Activated CD8-positive, alpha-beta T cell treated with anti-CD3 and anti-CD28 coated beads for 36 hours (primary cell): ENCODE measurements at regions of chr1 and their contacts with region 1.

Region 1: GRCh38 chr1:36115931-36116330 is 9.1 kb downstream of the COL8A2 start:
- DNase-seq: no peak
- ATAC-seq: no peak
- H3K4me3 Mint-ChIP-seq: no peak overlapping the region
- H3K27ac Mint-ChIP-seq: no peak overlapping the region
- H3K4me1 Mint-ChIP-seq: peaks cover 11% of the 10 kb centered on the region
- H3K27me3 Mint-ChIP-seq: no peaks in the 10 kb centered on the region
- CTCF ChIP-seq: no peak

Region 2: GRCh38 chr1:35622510-35623178 is 493.3 kb before region 1 on chr1:
- CTCF ChIA-PET with region 1: no interaction called
- POLR2A ChIA-PET with region 1: no interaction called
- intact Hi-C with region 1: no loop called
- DNase-seq: no peak
- ATAC-seq: no peak
- H3K4me3 Mint-ChIP-seq: no peak overlapping the region
- H3K27ac Mint-ChIP-seq: no peak overlapping the region
- H3K4me1 Mint-ChIP-seq: peaks cover 3% of the 10 kb centered on the region
- H3K27me3 Mint-ChIP-seq: no peaks in the 10 kb centered on the region
- CTCF ChIP-seq: no peak

Region 3: DNA sequence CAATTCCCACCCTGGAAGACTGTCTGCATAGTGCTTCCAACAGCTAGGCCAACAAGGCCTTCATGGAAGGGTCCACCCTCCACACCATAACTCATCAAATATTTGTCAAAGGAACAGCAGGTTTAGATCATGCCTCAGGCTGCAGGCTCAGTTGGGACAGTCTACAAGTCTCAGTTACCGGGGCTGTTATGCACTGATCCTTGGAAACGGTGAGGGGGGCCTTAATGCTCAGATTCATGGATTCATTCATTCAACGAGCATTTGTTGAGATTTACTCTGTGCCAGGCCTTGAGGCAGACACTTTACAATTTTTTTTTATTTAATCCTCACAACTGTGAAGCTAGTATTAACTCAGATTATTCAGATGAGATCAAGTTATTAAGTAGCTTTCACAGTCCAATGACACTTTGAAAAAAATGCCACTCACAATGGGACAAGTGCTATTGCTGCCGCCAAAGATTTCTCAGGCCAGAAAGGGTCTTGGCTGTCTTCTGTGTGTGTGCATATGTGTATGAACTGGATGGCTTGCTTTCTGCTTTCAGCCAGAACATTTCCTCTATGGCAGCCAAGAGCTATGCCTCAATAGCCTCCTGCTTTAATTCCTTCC is 388.4 kb before region 1 on chr1:
- CTCF ChIA-PET with region 1: no interaction called
- POLR2A ChIA-PET with region 1: no interaction called
- intact Hi-C with region 1: no loop called
- DNase-seq: no peak
- ATAC-seq: no peak
- H3K4me3 Mint-ChIP-seq: no peak overlapping the region
- H3K27ac Mint-ChIP-seq: no peak overlapping the region
- H3K4me1 Mint-ChIP-seq: no peaks in the 10 kb centered on the region
- H3K27me3 Mint-ChIP-seq: no peaks in the 10 kb centered on the region
- CTCF ChIP-seq: no peak

Region 4: GRCh38 chr1:36099681-36100341 is 16.1 kb before region 1 on chr1:
- CTCF ChIA-PET with region 1: interaction called, 12 read pairs
- POLR2A ChIA-PET with region 1: no interaction called
- intact Hi-C with region 1: no loop called
- DNase-seq: peak; percentile 86
- ATAC-seq: peak; percentile 92
- H3K4me3 Mint-ChIP-seq: no peak overlapping the region
- H3K27ac Mint-ChIP-seq: no peak overlapping the region
- H3K4me1 Mint-ChIP-seq: peaks cover 6% of the 10 kb centered on the region
- H3K27me3 Mint-ChIP-seq: no peaks in the 10 kb centered on the region
- CTCF ChIP-seq: peak; percentile 93